Psoas muscle (tissue), 8 donors: ENCODE measurements at regions of chr16 and their contacts with region 1.

Region 1: DNA sequence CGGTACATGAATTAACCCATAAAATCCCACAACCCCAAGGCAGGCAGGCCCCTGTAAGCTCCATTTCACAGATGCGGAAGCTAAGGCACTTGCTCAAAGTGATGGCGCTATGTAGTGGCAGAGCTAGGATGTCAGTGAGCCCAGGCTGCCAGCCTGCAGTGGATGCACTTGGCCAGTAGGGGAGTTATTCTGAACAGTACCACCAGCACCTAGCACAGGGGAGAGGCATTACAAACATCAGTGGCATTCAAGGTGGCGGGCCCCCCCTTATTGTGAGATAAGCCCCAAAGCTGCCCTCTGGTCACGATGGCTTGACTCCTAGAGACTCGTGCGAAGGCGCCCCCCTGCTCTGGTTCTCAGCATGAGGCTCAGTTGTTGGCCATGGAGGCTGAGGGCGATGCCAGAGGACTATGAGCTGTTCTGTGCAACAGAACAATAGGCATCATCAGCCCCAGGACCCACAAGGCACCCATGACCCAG is 33.8 kb downstream of the GTF3C1 start:
- DNase-seq: peak in 1 of 2 donors; percentile 59
- ATAC-seq: peak in 3 of 4 donors; percentile 48 to 53 (median 48)
- H3K4me3 ChIP-seq: no peak overlapping the region
- H3K27ac ChIP-seq: peak overlapping the region; percentile 91
- H3K4me1 ChIP-seq: peaks cover 51% of the 10 kb centered on the region
- H3K27me3 ChIP-seq: no peaks in the 10 kb centered on the region
- CTCF ChIP-seq: peak; percentile 50

Region 2: DNA sequence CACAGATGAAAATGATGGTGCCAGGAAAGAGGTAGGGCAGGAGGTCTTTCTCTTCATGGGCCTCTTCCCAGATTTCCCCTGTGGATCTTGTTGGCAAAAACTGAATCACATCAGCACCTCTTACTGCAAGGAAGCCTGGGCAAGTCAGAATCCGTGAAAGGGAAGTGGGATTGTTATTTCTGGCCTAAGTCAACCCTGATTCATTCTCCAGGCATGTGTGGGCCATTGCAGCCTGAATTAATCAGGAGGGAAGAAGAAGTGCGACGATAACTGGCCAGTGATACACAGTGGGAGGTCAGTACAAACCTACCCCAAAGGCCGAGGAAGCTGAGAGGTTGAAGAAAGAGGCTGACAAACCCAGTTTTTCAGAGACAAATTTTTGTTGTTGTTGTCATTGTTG is 229.5 kb before region 1 on chr16:
- intact Hi-C with region 1: no loop called
- DNase-seq: no peak
- ATAC-seq: peak in 2 of 4 donors; percentile 40 to 44
- H3K4me3 ChIP-seq: no peak overlapping the region
- H3K27ac ChIP-seq: no peak overlapping the region
- H3K4me1 ChIP-seq: no peaks in the 10 kb centered on the region
- H3K27me3 ChIP-seq: no peaks in the 10 kb centered on the region
- CTCF ChIP-seq: no peak

Region 3: DNA sequence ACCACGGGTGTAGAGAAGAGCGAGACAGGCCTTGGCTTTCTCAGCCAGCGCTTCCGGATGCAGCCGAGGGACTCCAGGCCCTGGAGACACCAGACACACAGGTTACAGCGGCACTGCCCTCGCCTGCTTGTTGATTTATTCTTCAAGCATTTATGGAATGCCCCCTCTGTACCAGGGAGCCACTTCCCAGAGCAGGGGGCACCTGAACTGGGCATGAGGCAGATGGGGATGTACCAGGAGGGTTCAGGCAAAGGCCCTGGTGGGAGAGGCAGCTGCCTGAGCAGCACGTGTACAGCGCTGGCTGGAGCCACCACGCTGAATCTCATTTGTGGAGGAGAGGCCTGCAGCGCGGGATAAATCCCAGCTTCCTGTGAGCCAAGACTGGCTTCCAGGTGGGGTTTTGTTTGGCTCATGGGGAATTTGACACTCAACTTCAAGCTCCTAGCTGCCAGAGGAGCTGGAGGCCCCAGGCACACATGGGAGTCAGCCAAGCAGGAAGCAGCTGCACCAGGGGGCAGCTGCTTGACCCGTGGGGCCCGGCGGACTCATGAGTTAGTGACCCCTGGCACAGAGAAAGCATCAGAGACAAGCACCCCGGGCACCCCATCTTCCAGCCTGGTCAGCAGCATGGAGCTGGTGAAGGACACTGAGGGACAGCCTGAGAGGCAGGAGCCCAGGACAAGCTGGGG is 54.3 kb before region 1 on chr16:
- intact Hi-C with region 1: no loop called
- DNase-seq: peak in 1 of 2 donors; percentile 66
- ATAC-seq: peak; percentile 44 to 65 (median 56)
- H3K4me3 ChIP-seq: no peak overlapping the region
- H3K27ac ChIP-seq: peak overlapping the region; percentile 78
- H3K4me1 ChIP-seq: peaks cover 25% of the 10 kb centered on the region
- H3K27me3 ChIP-seq: no peaks in the 10 kb centered on the region
- CTCF ChIP-seq: no peak

Region 4: DNA sequence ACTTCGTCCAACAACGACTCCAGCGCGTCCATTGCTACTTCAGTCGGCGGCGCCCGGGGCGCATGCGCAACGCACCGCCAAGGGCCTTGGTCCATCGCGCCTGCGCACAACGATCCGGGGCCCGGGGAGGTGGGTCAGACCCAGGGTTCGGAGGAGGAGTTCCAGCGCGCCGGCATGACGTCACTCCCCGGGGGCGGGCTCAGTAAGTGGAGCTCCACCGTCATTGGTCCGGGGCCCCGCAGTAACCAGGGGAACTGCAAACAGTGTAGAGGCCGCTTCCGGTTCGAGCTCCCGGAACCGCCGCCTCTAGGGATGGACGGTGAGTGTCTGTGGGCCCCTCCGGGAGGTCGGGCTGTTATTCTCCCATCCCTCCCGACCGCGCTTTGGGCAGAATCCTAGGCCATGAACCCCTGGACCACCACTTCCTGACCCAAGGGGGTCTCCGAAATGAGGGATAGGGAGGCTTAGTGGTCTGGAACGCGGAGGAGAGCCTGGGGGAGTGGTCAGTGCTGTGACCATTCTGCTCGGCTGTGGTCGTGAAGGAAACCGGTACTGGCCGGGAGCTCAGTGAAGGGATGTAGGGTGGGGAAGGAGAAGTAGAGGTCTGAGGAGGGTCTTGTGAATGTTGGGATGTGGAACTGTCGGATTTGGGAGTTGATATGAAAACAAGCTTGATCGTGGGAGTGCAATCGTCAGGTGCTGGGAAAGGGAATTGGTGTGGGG is 34.1 kb after region 1 on chr16 and contains the starts of genes GTF3C1 and KATNIP:
- intact Hi-C with region 1: loop called in 1 of 2 experiments (anchors 2 kb)
- DNase-seq: peak; percentile 100
- ATAC-seq: peak; percentile 99 to 100 (median 100)
- H3K4me3 ChIP-seq: peak within 1 kb of the TSS; percentile 93
- H3K27ac ChIP-seq: peak within 1 kb of the TSS; percentile 87
- H3K4me1 ChIP-seq: peaks cover 34% of the 10 kb centered on the region
- H3K27me3 ChIP-seq: no peaks in the 10 kb centered on the region
- CTCF ChIP-seq: no peak
- total RNA-seq, gene GTF3C1: 35.2 to 95.5 (median 55.5) TPM
- total RNA-seq, gene KATNIP: 4.5 to 8.7 (median 6.4) TPM